Naive thymus-derived CD4-positive, alpha-beta T cell (primary cell): ENCODE measurements at regions of chr12 and their contacts with region 1.

Region 1: DNA sequence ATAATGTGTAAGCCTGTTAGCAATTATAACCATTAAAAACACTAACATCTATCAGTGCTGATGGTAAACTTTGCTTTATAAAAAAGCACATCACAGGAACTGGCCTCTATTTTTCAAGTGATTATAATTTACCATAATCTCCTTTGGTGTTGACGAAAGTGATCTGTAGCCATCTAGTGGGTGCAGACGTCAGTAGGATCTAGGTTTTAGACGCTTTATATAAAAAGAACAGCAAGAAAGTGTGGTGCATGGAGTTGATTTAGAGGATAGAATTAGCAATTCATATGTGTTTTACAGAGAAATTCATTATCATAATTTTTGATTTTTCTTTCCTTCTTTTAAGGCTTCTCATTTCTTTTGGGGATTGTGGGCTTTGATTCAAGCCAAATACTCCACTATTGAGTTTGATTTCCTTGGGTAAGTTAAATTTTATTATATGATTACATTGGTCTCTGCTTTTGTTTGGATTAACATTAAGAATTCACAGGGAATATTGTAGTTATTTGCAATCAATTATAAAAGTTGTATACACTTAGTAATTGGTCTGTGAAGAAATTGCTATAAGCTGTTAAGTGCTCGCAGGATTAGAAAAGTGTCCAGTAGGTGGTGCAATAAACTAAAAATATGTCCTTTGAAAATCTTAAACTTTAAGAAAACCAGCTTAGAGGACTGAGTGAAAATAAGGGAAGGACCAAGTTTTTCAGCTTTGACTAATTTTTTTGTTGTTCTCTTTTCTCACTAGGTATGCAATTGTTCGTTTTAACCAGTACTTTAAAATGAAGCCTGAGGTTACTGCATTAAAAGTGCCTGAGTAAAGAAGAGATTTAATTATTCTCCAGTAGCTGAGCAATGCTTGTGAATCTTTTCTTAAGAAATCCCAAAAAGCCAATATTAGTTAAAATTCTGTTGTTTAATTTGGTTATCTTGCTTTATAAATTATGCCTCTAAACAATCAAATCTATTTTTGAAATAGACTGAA is 59.5 kb downstream of the ETNK1 start:
- DNase-seq: peak in 4 of 9 donors; percentile 5 to 23 (median 12)
- ATAC-seq: peak; percentile 60
- H3K4me3 ChIP-seq: no peak overlapping the region
- H3K4me3 Mint-ChIP-seq: no peak overlapping the region
- H3K27ac ChIP-seq: no peak overlapping the region
- H3K27ac Mint-ChIP-seq: peak overlapping the region in 1 of 9 donors; percentile 14
- H3K4me1 ChIP-seq: peaks cover 0 to 9% of the 10 kb centered on the region in 2 donors
- H3K4me1 Mint-ChIP-seq: peaks cover 8 to 20% (median 14%) of the 10 kb centered on the region in 7 donors
- H3K27me3 ChIP-seq: no peaks in the 10 kb centered on the region
- H3K27me3 Mint-ChIP-seq: no peaks in the 10 kb centered on the region

Region 2: GRCh38 chr12:22670762-22671161 is 13.7 kb before region 1 on chr12:
- CTCF ChIA-PET with region 1: interaction called, 3 read pairs
- POLR2A ChIA-PET with region 1: no interaction called
- intact Hi-C with region 1: loop called in 1 of 2 experiments (anchors 2 kb)
- DNase-seq: no peak
- ATAC-seq: no peak
- H3K4me3 ChIP-seq: no peak overlapping the region
- H3K4me3 Mint-ChIP-seq: no peak overlapping the region
- H3K27ac ChIP-seq: no peak overlapping the region
- H3K27ac Mint-ChIP-seq: no peak overlapping the region
- H3K4me1 ChIP-seq: no peaks in the 10 kb centered on the region
- H3K4me1 Mint-ChIP-seq: peaks cover 0 to 3% (median 0%) of the 10 kb centered on the region in 7 donors
- H3K27me3 ChIP-seq: no peaks in the 10 kb centered on the region
- H3K27me3 Mint-ChIP-seq: no peaks in the 10 kb centered on the region

Region 3: DNA sequence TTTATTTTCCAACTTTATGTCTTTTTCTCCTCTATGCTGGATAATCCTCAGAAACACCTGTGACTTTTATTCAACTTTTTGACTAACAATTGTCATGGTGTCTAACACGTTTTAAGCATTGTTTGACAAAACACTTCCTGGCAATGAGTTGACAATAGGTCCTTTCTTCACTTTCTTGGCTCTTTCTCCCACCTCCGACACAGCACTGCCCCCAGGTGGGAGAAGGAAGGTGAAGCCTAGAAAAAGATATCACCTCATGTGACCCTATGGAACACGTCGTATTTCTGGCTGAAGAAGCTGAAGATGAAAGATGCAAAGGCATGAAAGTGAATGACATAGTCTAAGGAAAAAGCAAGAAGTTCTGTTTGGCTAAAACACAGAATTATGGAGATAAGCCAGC is 370.6 kb after region 1 on chr12:
- CTCF ChIA-PET with region 1: no interaction called
- POLR2A ChIA-PET with region 1: no interaction called
- intact Hi-C with region 1: loop called in 1 of 2 experiments (anchors 10 kb)
- DNase-seq: no peak
- ATAC-seq: no peak
- H3K4me3 ChIP-seq: no peak overlapping the region
- H3K4me3 Mint-ChIP-seq: no peak overlapping the region
- H3K27ac ChIP-seq: no peak overlapping the region
- H3K27ac Mint-ChIP-seq: no peak overlapping the region
- H3K4me1 ChIP-seq: no peaks in the 10 kb centered on the region
- H3K4me1 Mint-ChIP-seq: no peaks in the 10 kb centered on the region
- H3K27me3 ChIP-seq: no peaks in the 10 kb centered on the region
- H3K27me3 Mint-ChIP-seq: no peaks in the 10 kb centered on the region